Caco-2 (cell line): ENCODE measurements at regions of chr13 and their contacts with region 1.

Region 1: DNA sequence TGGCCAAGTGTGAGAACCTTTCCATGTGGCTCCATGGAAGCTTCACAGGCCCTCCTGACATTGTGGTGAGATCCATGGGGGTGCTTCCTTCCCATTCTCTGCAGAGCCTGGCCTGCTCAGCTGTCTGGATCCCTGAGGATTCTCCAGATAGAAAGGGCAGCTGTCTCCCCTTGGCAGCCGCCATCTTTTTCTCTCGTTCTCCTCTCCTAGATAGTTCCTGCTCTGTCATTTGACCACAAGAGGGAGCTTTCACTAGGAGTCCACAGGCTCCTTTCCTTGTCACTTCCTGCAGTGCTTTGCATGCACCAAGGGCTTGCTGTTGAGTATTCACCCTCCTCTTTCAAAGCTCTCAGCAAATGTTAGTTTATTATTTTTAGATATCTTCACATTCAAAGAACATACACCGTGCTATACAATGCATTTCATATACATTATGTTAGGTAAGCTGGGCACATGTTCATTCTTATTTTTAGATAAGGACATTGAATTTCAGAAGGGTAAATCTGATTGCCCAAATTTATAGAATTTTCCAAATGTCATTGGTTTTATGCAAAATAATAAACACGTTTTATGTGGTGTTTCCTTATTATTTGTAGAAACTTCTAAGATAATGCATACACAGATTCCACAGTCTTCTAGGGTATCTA is 133.2 kb downstream of the FRY start:
- DNase-seq: peak; percentile 76 to 81
- H3K4me3 ChIP-seq: no peak overlapping the region
- H3K4me3 Mint-ChIP-seq: no peak overlapping the region
- H3K27ac Mint-ChIP-seq: peak overlapping the region; percentile 82
- H3K4me1 ChIP-seq: peaks cover 52% of the 10 kb centered on the region
- H3K4me1 Mint-ChIP-seq: peaks cover 46% of the 10 kb centered on the region
- H3K27me3 ChIP-seq: no peaks in the 10 kb centered on the region
- H3K27me3 Mint-ChIP-seq: no peaks in the 10 kb centered on the region
- CTCF ChIP-seq: peak; percentile 73 to 77

Region 2: GRCh38 chr13:32031025-32031814 is 133.5 kb before region 1 on chr13 and contains the start of gene FRY:
- CTCF ChIA-PET with region 1: no interaction called
- POLR2A ChIA-PET with region 1: interaction called, 3 read pairs
- intact Hi-C with region 1: loop called (anchors 2 kb)
- DNase-seq: peak; percentile 87 to 90
- H3K4me3 ChIP-seq: peak within 1 kb of the TSS; percentile 64
- H3K4me3 Mint-ChIP-seq: peak within 1 kb of the TSS; percentile 78
- H3K27ac Mint-ChIP-seq: peak within 1 kb of the TSS; percentile 83
- H3K4me1 ChIP-seq: peaks cover 16% of the 10 kb centered on the region
- H3K4me1 Mint-ChIP-seq: peaks cover 24% of the 10 kb centered on the region
- H3K27me3 ChIP-seq: no peaks in the 10 kb centered on the region
- H3K27me3 Mint-ChIP-seq: no peaks in the 10 kb centered on the region
- CTCF ChIP-seq: peak in 1 of 2 experiments; percentile 31
- total RNA-seq, gene FRY: 91.3 and 118 TPM in 2 replicates

Region 3: DNA sequence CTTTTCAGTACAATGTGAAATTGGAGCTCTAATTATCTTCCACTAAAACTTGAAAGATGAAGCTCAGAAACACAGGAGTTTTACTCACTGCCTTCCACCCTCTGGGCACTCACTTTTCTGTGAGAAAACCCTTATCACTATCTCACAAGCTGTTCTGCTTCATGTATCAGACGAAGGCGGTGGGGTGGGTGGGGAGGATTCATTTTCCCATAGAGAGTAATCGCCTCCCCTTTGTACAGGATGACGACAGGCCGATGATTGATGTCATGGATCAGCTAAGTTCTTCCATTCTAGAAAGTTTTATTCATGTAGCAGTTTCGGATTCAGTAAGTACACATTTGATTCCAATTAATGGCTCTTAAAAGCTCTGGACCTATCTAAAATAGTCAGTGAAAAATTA is 10.6 kb after region 1 on chr13:
- CTCF ChIA-PET with region 1: interaction called, 15 read pairs
- POLR2A ChIA-PET with region 1: no interaction called
- intact Hi-C with region 1: no loop called
- DNase-seq: no peak
- H3K4me3 ChIP-seq: no peak overlapping the region
- H3K4me3 Mint-ChIP-seq: no peak overlapping the region
- H3K27ac Mint-ChIP-seq: no peak overlapping the region
- H3K4me1 ChIP-seq: peaks cover 34% of the 10 kb centered on the region
- H3K4me1 Mint-ChIP-seq: peaks cover 30% of the 10 kb centered on the region
- H3K27me3 ChIP-seq: no peaks in the 10 kb centered on the region
- H3K27me3 Mint-ChIP-seq: no peaks in the 10 kb centered on the region
- CTCF ChIP-seq: no peak

Region 4: DNA sequence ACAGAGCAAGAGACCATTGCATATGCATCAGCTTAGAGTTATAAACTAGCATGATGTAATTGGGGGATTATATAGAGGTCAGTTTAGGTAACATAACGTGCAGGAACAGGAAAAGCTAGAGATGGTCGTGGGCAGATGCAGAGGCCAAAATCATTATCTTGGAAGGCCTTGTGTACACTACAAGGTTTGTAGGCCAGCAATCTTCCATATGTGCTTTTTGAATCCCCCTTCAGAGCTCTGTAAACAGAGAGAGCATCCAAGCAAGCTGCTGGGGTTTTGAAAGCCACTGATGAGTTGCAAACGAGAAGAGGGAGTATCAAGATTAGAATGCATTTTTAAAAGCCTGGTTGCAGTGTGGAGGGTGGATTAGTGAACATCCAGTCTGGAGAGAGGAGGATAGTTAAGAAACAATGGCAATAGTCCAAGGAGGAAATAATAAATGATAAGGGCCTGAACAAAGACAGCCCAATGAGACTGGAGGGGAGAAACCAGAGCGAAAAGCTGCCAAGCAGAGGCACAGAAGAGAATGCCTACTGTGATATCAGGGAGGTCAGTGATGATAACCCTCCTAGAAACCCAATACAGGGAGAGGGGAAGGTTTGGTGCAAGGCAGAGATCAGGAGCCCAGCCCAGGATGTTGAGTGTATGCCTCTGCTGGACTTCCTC is 40.8 kb after region 1 on chr13:
- CTCF ChIA-PET with region 1: interaction called, 5 read pairs
- POLR2A ChIA-PET with region 1: no interaction called
- intact Hi-C with region 1: loop called (anchors 5 kb)
- DNase-seq: no peak
- H3K4me3 ChIP-seq: no peak overlapping the region
- H3K4me3 Mint-ChIP-seq: no peak overlapping the region
- H3K27ac Mint-ChIP-seq: peak overlapping the region; percentile 28
- H3K4me1 ChIP-seq: peaks cover 38% of the 10 kb centered on the region
- H3K4me1 Mint-ChIP-seq: peaks cover 32% of the 10 kb centered on the region
- H3K27me3 ChIP-seq: no peaks in the 10 kb centered on the region
- H3K27me3 Mint-ChIP-seq: no peaks in the 10 kb centered on the region
- CTCF ChIP-seq: no peak

Region 5: GRCh38 chr13:32228330-32229041 is 63.7 kb after region 1 on chr13:
- CTCF ChIA-PET with region 1: interaction called, 3 read pairs
- POLR2A ChIA-PET with region 1: no interaction called
- intact Hi-C with region 1: loop called (anchors 1 kb)
- DNase-seq: peak; percentile 81 to 85
- H3K4me3 ChIP-seq: no peak overlapping the region
- H3K4me3 Mint-ChIP-seq: peak overlapping the region; percentile 6
- H3K27ac Mint-ChIP-seq: peak overlapping the region; percentile 14
- H3K4me1 ChIP-seq: peaks cover 46% of the 10 kb centered on the region
- H3K4me1 Mint-ChIP-seq: peaks cover 26% of the 10 kb centered on the region
- H3K27me3 ChIP-seq: no peaks in the 10 kb centered on the region
- H3K27me3 Mint-ChIP-seq: no peaks in the 10 kb centered on the region
- CTCF ChIP-seq: peak; percentile 10 to 39

Region 6: DNA sequence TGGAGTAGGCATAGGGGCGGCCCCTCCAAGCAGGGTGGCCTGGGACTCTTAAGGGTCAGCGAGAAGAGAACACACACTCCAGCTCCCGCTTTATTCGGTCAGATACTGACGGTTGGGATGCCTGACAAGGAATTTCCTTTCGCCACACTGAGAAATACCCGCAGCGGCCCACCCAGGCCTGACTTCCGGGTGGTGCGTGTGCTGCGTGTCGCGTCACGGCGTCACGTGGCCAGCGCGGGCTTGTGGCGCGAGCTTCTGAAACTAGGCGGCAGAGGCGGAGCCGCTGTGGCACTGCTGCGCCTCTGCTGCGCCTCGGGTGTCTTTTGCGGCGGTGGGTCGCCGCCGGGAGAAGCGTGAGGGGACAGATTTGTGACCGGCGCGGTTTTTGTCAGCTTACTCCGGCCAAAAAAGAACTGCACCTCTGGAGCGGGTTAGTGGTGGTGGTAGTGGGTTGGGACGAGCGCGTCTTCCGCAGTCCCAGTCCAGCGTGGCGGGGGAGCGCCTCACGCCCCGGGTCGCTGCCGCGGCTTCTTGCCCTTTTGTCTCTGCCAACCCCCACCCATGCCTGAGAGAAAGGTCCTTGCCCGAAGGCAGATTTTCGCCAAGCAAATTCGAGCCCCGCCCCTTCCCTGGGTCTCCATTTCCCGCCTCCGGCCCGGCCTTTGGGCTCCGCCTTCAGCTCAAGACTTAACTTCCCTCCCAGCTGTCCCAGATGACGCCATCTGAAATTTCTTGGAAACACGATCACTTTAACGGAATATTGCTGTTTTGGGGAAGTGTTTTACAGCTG is 150.7 kb after region 1 on chr13 and contains the starts of genes BRCA2 and ZAR1L:
- CTCF ChIA-PET with region 1: interaction called, 10 read pairs
- POLR2A ChIA-PET with region 1: interaction called, 3 read pairs
- intact Hi-C with region 1: loop called (anchors 1 kb)
- DNase-seq: peak; percentile 91
- H3K4me3 ChIP-seq: peak within 1 kb of the TSS; percentile 77
- H3K4me3 Mint-ChIP-seq: peak within 1 kb of the TSS; percentile 88
- H3K27ac Mint-ChIP-seq: peak within 1 kb of the TSS; percentile 98
- H3K4me1 ChIP-seq: peaks cover 21% of the 10 kb centered on the region
- H3K4me1 Mint-ChIP-seq: peaks cover 11% of the 10 kb centered on the region
- H3K27me3 ChIP-seq: no peaks in the 10 kb centered on the region
- H3K27me3 Mint-ChIP-seq: no peaks in the 10 kb centered on the region
- CTCF ChIP-seq: no peak
- total RNA-seq, gene BRCA2: 29.8 and 32.5 TPM in 2 replicates
- total RNA-seq, gene ZAR1L: 0.53 TPM in 1 of 2 replicates, not detected in the other